ENCODE measurements at regions of chr7 and their contacts with region 1.

Region 1: DNA sequence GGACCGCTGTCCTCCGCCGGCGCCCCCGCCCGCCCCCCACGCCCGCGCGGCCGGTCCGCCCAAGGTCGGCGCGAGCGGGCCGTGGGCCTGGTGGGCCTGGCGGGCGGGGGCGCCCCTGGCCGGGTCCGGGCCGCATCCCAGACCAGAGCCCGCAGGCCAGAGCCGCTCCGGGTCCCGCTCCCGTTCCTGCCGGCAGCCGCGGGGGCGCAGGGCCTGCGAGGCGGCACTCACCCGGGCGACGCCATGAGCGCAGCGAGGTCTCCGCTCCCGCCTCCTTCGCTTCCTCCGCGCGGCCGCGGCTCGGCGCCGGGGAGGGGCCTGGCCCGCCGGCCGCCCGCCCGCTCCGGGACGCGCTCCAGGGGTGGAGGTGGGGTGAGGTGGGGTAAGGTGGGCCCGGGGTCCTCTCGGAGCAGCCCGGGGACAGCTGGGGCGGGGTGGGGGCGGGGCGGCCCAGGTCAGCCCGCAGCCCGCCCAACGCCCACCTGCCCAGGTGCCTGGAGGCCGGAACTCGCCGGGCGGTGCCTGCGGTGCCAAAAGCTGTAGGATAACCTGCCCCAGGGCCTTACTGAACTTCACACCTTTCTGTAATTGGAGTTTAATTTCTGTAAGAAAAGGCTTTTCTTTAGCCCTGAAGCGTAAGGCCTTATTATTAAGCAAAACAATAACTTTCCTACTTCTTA is at the start of gene URGCP:
- DNase-seq: peak; percentile 80
- total RNA-seq, gene URGCP: 40.0 TPM

Region 2: GRCh38 chr7:43636093-43636492 is 270.4 kb before region 1 on chr7:
- intact Hi-C with region 1: no loop called
- DNase-seq: no peak

Region 3: DNA sequence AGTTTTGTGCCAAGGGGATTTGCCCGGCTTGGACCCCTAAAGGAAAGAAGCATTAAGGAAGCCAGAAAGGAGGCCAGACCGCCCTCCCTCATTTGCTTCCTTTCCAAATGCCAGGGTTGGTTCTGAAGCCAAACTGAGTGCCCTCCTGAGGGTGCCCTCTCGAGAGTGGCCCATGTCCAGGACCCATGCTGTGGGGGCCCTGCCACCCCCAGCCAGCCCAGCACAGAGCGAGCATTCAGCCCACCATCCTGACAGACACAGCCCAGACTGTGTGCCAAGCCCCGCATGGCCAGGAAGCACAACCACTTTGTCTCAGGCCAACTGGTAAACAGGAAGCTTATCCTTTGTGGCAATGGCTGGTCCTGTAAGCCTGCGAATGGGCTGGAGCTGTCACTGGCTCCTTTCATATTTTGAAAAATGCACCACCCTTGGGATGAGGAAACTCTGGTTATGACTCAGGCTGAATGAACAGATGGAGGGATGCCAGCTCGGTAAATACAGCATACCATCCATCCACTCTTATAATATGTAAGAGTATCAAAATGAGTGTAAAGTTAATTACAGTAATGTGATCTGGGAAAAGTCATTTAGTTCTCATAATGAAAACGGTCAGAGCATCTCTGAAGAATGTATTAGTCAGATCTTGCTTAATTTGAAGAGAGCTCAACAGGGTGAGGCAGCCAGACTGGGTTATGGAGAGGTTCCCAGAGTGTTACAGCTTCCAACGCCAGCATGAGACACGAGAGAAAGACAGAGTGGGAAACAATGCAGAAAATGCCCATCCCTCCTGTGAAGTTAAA is 258.6 kb before region 1 on chr7:
- intact Hi-C with region 1: no loop called
- DNase-seq: peak; percentile 78

Region 4: GRCh38 chr7:43869867-43870240 is 36.6 kb before region 1 on chr7:
- intact Hi-C with region 1: loop called (anchors 5 kb)
- DNase-seq: no peak

Measured in cardiac septum (tissue), 1 donor.